ENCODE measurements at regions of chr20 and their contacts with region 1.

Region 1: GRCh38 chr20:9344083-9344920 is 170.1 kb upstream of the LAMP5 start:
- DNase-seq: no peak

Region 2: DNA sequence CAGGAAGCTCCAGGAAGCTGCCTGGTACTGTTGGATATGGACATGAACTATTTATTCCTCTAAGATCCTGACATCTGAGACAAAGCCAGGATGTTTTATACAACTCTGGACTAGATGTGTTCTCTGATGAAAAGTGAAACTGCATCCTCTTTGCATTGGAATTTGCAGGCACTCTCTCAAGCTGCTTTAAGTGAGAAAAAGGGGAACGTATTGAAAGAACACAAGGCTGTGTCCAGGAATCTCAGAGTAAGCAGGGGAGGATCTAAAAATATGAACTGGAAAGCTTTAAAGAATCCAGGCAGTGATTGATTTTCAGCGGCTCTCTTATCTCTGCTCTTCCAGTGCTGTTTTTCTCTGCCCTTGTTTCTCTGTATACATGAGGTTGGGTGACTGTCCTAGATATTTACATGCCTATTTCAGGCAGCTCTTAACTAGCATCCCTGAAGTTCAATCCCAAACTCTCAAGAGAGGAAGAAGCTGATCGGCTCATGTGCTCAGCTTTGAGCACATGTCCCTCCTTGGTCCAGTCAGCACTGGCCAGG is 81.6 kb before region 1 on chr20:
- intact Hi-C with region 1: loop called (anchors 10 kb)
- DNase-seq: no peak

Region 3: GRCh38 chr20:9301129-9302090 is 42.9 kb before region 1 on chr20:
- intact Hi-C with region 1: loop called (anchors 5 kb)
- DNase-seq: no peak

Region 4: DNA sequence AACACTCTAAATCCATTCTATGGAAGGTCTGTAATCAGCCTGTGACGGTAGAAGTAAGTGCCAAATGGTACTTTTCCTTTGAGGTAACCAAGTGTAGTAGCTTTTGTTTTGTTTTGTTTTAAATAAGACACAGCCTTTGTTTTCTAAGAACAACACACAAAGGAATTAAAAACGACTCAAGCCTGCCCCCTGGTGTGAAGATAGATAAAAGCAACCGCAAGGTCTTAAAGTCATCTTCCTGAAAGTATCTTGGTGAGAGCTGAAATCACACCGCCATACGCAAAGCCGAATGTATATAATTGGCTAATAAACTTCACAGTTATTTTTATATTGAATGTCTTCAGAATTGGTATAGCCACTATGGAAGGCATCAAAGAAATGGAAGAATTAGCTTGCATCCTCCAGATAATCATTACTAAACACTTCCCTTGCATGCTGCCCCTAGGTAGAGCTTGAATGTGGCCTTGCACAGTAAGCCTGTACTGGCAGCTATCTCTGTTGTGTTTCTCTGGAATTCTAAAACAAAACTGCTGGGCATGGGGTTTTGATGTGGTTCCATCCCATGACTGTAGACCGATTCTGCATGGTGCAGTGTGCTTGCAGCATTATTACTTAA is 265.7 kb after region 1 on chr20:
- intact Hi-C with region 1: no loop called
- DNase-seq: no peak